ENCODE measurements at regions of chr10 and their contacts with region 1.

Region 1: DNA sequence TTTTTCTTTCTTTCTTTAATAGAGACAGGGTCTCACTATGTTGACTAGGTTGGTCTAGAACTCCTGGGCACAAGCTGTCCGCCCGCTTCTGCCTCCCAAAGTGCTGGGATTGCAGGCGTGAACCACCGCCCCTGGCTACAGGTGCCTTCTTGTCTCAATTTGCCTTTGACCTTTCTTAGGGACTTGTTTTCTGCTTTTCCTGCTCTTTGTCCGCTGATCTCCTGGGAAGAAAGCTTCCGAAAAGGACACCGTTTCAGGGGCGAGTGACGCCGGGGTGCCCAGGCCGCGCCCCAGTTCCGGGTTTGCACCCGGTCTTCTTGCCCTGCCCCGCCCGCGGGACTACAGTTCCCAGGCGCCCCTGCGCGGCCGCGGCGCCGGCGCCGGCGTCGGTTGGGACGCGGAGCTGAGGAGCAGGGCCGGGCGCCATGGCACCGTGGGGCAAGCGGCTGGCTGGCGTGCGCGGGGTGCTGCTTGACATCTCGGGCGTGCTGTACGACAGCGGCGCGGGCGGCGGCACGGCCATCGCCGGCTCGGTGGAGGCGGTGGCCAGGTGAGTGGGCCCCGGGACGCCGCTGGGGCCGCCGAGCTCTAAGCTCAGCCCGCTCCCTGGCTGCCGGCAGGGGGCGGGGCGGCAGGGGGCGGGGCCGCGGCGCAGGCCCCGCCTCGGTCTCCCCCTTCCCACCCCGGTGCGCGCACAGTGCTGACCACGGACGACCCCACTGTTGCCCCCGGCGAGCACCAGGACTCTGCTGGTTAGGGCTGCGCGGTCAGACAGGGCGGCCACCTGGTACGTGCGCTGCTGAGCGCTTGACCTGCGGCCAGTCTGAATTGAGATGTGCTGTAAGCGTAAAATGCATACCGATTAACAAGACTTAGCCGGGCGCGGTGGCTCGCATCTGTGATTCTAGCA is at the start of gene LHPP:
- DNase-seq: peak; percentile 90
- ATAC-seq: peak; percentile 95
- H3K4me3 Mint-ChIP-seq: peak within 1 kb of the TSS; percentile 72
- H3K27ac Mint-ChIP-seq: peak within 1 kb of the TSS; percentile 96
- H3K4me1 Mint-ChIP-seq: peaks cover 32% of the 10 kb centered on the region
- H3K27me3 Mint-ChIP-seq: peaks cover 5% of the 10 kb centered on the region
- CTCF ChIP-seq: peak; percentile 29
- total RNA-seq, gene LHPP: 11.1 to 15.1 TPM

Region 2: DNA sequence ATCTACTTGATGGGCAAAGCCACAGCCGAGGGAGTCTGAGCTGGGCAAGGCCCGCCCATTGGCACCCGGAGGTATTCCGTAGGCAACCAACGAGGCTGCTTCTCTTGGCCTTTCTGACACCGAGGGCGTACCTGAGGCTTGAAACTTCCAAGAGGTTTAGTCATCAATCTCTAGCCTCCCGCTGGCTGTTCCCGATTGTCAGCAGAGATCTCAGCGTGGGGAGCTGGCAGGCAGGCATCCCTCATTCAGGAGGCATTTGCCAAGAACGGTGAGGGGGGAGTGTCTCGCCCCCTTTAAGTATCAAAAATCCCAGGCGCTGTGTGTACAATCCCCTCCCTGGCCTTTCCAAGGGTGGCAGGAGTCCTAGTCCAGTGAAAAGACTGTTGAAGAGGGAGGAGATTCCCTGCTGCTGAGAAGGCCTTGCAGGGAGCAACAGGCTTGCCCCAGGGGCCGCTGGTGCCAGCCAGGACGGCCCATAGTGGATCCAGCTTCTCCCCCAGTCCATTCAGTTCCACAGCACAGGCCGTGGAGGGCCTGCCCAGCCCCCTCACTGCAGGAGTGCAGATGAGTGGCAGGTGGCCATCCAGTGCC is 82.7 kb before region 1 on chr10:
- CTCF ChIA-PET with region 1: no interaction called
- POLR2A ChIA-PET with region 1: no interaction called
- intact Hi-C with region 1: no loop called
- DNase-seq: no peak
- ATAC-seq: no peak
- H3K4me3 Mint-ChIP-seq: no peak overlapping the region
- H3K27ac Mint-ChIP-seq: no peak overlapping the region
- H3K4me1 Mint-ChIP-seq: no peaks in the 10 kb centered on the region
- H3K27me3 Mint-ChIP-seq: peaks cover 28% of the 10 kb centered on the region
- CTCF ChIP-seq: no peak

Region 3: DNA sequence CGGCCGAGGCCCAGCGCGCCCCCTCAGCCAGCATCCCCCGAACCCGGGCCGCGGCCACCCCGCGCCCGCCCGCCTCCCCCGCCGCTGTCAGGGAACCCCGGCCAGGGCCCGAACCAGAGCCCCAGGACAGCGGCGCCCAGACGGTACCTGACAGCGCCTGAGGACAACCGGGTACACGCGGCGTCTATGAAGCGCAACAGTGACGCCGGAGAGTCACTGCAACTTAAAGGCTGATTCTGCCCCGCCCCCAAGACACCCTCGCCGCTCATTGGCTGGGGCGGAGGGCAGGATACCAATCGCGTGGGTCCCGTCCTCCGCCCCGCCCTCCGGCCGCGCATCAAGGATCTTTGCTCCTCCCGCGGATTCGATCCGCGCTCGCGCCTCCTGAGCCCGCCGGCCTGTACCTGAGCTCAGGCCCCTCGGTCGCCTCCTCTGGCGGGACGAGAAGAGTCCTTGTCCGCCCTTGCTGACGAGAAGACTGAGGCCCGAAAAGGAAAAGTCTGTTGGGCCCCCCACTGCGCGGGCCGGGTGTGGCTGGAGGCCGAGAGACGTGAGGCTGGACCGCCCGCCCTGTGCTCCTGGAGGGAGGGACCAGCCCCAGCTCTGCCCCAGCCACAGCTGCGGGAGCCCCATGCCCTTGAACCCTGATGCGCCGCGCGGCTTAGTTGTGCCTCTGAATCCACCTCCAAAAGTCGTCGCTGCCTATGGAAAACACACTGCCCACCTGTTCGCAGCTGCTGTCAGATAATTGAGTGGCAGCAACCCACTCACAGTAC is 42.8 kb before region 1 on chr10 and contains the start of gene OAT:
- CTCF ChIA-PET with region 1: interaction called, 3 read pairs
- POLR2A ChIA-PET with region 1: interaction called, 10 read pairs
- intact Hi-C with region 1: no loop called
- DNase-seq: peak; percentile 99
- ATAC-seq: peak; percentile 99
- H3K4me3 Mint-ChIP-seq: peak within 1 kb of the TSS; percentile 81
- H3K27ac Mint-ChIP-seq: peak within 1 kb of the TSS; percentile 64
- H3K4me1 Mint-ChIP-seq: peaks cover 16% of the 10 kb centered on the region
- H3K27me3 Mint-ChIP-seq: peaks cover 4% of the 10 kb centered on the region
- CTCF ChIP-seq: no peak
- total RNA-seq, gene OAT: 40.2 to 44.3 TPM

Region 4: GRCh38 chr10:124450012-124450781 is 11.5 kb before region 1 on chr10 and contains the start of gene NKX1-2:
- CTCF ChIA-PET with region 1: interaction called, 3 read pairs
- POLR2A ChIA-PET with region 1: interaction called, 14 read pairs
- intact Hi-C with region 1: no loop called
- DNase-seq: no peak
- ATAC-seq: no peak
- H3K4me3 Mint-ChIP-seq: no peak within 1 kb of the TSS
- H3K27ac Mint-ChIP-seq: no peak within 1 kb of the TSS
- H3K4me1 Mint-ChIP-seq: peaks cover 17% of the 10 kb centered on the region
- H3K27me3 Mint-ChIP-seq: peaks cover 79% of the 10 kb centered on the region
- CTCF ChIP-seq: no peak
- total RNA-seq, gene NKX1-2: not detected